CD8-positive, alpha-beta T cell (primary cell): ENCODE measurements at regions of chr18 and their contacts with region 1.

Region 1: DNA sequence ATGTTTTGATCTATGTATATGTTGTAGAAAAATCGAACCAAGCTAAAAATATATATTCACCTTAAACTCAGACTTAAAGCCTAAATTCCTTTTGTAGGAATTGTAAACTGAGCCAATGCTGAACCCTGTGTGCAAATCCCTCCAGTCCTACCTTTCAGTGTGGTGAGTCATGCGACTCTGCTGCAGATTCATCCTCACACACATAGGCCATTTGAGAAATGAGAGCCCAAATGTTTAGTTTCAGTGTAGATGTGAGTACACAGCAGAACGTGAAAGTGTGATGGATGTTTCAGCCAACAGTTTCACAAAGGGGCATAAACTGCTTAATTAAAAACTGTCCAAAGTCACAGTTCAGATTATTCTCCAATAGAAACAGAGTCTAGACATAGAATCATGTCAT is 193.2 kb downstream of the CDH19 start:
- DNase-seq: no peak
- ATAC-seq: no peak
- H3K4me3 ChIP-seq: no peak overlapping the region
- H3K4me3 Mint-ChIP-seq: no peak overlapping the region
- H3K27ac ChIP-seq: no peak overlapping the region
- H3K27ac Mint-ChIP-seq: no peak overlapping the region
- H3K4me1 ChIP-seq: no peaks in the 10 kb centered on the region
- H3K4me1 Mint-ChIP-seq: no peaks in the 10 kb centered on the region
- H3K27me3 ChIP-seq: no peaks in the 10 kb centered on the region
- H3K27me3 Mint-ChIP-seq: no peaks in the 10 kb centered on the region
- CTCF ChIP-seq: no peak

Region 2: GRCh38 chr18:65901522-65901921 is 509.2 kb before region 1 on chr18:
- CTCF ChIA-PET with region 1: no interaction called
- POLR2A ChIA-PET with region 1: no interaction called
- intact Hi-C with region 1: loop called in 1 of 2 experiments (anchors 5 kb)
- DNase-seq: no peak
- ATAC-seq: no peak
- H3K4me3 ChIP-seq: no peak overlapping the region
- H3K4me3 Mint-ChIP-seq: no peak overlapping the region
- H3K27ac ChIP-seq: no peak overlapping the region
- H3K27ac Mint-ChIP-seq: no peak overlapping the region
- H3K4me1 ChIP-seq: no peaks in the 10 kb centered on the region
- H3K4me1 Mint-ChIP-seq: no peaks in the 10 kb centered on the region
- H3K27me3 ChIP-seq: no peaks in the 10 kb centered on the region
- H3K27me3 Mint-ChIP-seq: no peaks in the 10 kb centered on the region
- CTCF ChIP-seq: no peak